ENCODE measurements at regions of chr2 and their contacts with region 1.

Region 1: DNA sequence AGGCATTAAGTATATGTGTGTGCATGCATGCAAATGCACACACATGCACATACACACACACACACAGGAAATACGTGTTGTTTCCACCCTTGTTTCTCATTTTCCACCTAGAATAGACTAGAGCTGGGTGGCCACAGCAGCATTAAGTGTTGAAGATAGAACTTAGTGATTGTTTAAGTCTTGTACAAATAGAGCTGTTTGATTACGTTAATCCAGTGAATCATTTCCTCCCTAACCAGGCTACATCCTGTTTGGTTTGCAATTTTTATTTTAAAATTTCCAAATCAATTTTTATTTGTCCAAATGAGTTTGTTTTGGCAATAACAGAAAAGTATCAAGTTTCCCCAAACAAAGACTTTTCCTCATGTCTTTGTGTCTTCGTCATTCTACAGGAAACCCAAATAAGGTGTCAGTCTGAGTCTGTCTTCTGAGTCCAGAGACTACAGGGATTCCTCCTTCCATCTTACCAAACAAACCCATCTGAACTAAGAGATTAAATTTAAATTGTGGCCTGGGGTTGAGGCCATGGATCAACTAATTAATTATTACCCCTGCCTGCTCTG is 74.6 kb upstream of the GALNT5 start:
- DNase-seq: peak; percentile 50
- ATAC-seq: peak; percentile 77; the same call in 1 of the 2 replicates
- H3K4me3 ChIP-seq: peak overlapping the region in 1 of 2 experiments; percentile 19; a peak in 1 of 4 replicates
- H3K27ac ChIP-seq: no peak overlapping the region
- H3K4me1 ChIP-seq: no peaks in the 10 kb centered on the region
- H3K27me3 ChIP-seq: no peaks in the 10 kb centered on the region
- CTCF ChIP-seq: no peak

Region 2: GRCh38 chr2:157262248-157262647 is 79.3 kb after region 1 on chr2:
- CTCF ChIA-PET with region 1: no interaction called
- POLR2A ChIA-PET with region 1: interaction called, 11 read pairs
- in situ Hi-C with region 1: no loop called
- intact Hi-C with region 1: no loop called
- DNase-seq: no peak
- ATAC-seq: no peak
- H3K4me3 ChIP-seq: no peak overlapping the region
- H3K27ac ChIP-seq: no peak overlapping the region
- H3K4me1 ChIP-seq: no peaks in the 10 kb centered on the region
- H3K27me3 ChIP-seq: no peaks in the 10 kb centered on the region
- CTCF ChIP-seq: no peak